Esophagus muscularis mucosa (tissue), 4 donors: ENCODE measurements at regions of chr11 and their contacts with region 1.

Region 1: GRCh38 chr11:45332276-45332934 is 46.3 kb upstream of the SYT13 start:
- DNase-seq: peak; percentile 90
- H3K4me3 ChIP-seq: peak overlapping the region in 3 of 4 donors; percentile 11 to 28 (median 18)
- H3K27ac ChIP-seq: peak overlapping the region; percentile 1 to 54 (median 38)
- H3K4me1 ChIP-seq: peaks cover 3 to 18% (median 15%) of the 10 kb centered on the region in 4 donors
- H3K27me3 ChIP-seq: peaks cover 0 to 11% (median 0%) of the 10 kb centered on the region in 4 donors
- CTCF ChIP-seq: peak; percentile 50 to 87 (median 82)
- EP300 ChIP-seq: no peak
- POLR2A ChIP-seq: no peak

Region 2: DNA sequence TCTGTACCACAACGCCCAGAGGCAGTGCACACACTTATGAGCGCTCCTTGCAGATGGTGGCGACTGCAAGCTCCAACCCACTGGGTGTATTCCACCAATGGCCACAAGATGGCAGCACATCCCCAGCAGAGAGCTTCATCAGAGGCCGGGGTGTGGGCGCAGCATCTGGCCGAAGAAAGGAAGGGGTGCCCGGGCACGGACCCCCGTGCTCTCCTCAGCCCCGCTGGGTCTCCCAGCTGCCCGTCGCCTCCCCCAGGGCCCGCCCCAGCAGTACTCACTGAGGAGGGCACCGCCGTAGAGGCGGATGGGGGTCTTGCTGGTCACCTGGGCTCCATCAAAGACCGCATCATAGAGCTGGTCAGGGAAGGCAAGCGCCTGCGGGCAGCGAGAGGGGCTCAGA is 395.9 kb before region 1 on chr11:
- intact Hi-C with region 1: loop called (anchors 5 kb)
- DNase-seq: peak; percentile 96
- H3K4me3 ChIP-seq: no peak overlapping the region
- H3K27ac ChIP-seq: no peak overlapping the region
- H3K4me1 ChIP-seq: peaks cover 22 to 51% (median 38%) of the 10 kb centered on the region in 4 donors
- H3K27me3 ChIP-seq: no peaks in the 10 kb centered on the region
- CTCF ChIP-seq: peak in 2 of 3 experiments; percentile 96 to 98
- EP300 ChIP-seq: no peak
- POLR2A ChIP-seq: no peak

Region 3: GRCh38 chr11:45110562-45110961 is 221.8 kb before region 1 on chr11:
- intact Hi-C with region 1: loop called (anchors 2 kb)
- DNase-seq: peak; percentile 89
- H3K4me3 ChIP-seq: no peak overlapping the region
- H3K27ac ChIP-seq: no peak overlapping the region
- H3K4me1 ChIP-seq: peaks cover 0 to 7% (median 0%) of the 10 kb centered on the region in 4 donors
- H3K27me3 ChIP-seq: peaks cover 0 to 35% (median 0%) of the 10 kb centered on the region in 4 donors
- CTCF ChIP-seq: peak; percentile 80 to 89 (median 80)
- EP300 ChIP-seq: no peak
- POLR2A ChIP-seq: no peak

Region 4: GRCh38 chr11:45298718-45299117 is 33.7 kb before region 1 on chr11:
- intact Hi-C with region 1: loop called (anchors 5 kb)
- DNase-seq: peak; percentile 75
- H3K4me3 ChIP-seq: no peak overlapping the region
- H3K27ac ChIP-seq: no peak overlapping the region
- H3K4me1 ChIP-seq: no peaks in the 10 kb centered on the region
- H3K27me3 ChIP-seq: no peaks in the 10 kb centered on the region
- CTCF ChIP-seq: no peak
- EP300 ChIP-seq: no peak
- POLR2A ChIP-seq: no peak

Region 5: GRCh38 chr11:45617871-45618601 is 285.6 kb after region 1 on chr11:
- intact Hi-C with region 1: no loop called
- DNase-seq: peak; percentile 82
- H3K4me3 ChIP-seq: no peak overlapping the region
- H3K27ac ChIP-seq: no peak overlapping the region
- H3K4me1 ChIP-seq: no peaks in the 10 kb centered on the region
- H3K27me3 ChIP-seq: peaks cover 0 to 24% (median 0%) of the 10 kb centered on the region in 4 donors
- CTCF ChIP-seq: no peak
- EP300 ChIP-seq: no peak
- POLR2A ChIP-seq: no peak